ENCODE measurements at regions of chr15 and their contacts with region 1.

Region 1: DNA sequence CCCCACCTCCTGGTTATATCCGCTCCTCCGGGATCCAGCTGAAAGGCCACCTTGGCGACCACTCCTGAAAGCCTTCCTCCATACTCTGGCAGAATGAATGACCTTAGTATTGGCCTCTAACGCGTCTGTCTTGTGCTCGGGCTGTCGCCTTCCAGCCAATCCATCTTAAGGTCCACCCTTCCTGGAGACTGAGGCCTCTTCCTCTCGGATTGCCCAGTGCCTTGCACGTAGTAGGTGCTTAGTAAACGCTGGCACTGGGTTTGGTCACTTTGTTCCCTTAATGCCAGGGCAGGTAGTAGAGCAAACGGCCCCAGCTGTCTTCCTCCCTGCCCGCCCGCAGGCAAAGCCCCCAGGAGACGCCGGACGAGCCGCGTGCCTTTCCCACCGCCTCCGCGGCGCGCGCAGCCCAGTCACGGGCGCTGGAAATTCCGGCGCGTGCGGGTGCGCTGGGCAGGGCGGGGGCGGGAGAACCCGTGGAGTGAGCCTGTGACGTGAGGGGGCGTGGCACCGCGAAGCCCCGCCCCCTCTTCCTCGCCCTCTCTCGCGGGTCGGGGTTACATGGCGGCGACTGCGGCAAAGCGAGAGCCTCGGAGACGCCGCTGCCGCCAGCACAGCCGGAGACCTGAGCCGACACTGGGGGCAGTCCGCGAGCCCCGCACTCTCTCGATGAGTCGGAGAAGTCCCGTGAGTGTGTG is at the start of gene MAPK6:
- DNase-seq: peak; percentile 95
- H3K4me3 Mint-ChIP-seq: peak within 1 kb of the TSS; percentile 98
- H3K27ac Mint-ChIP-seq: peak within 1 kb of the TSS; percentile 99
- H3K4me1 Mint-ChIP-seq: peaks cover 39% of the 10 kb centered on the region
- H3K27me3 Mint-ChIP-seq: no peaks in the 10 kb centered on the region
- total RNA-seq, gene MAPK6: 39.9 to 40.8 TPM

Region 2: GRCh38 chr15:51971375-51972133 is 47.3 kb before region 1 on chr15 and contains the start of gene LEO1:
- CTCF ChIA-PET with region 1: interaction called, 3 read pairs
- POLR2A ChIA-PET with region 1: interaction called, 15 read pairs
- intact Hi-C with region 1: loop called (anchors 1 kb)
- DNase-seq: peak; percentile 93
- H3K4me3 Mint-ChIP-seq: peak within 1 kb of the TSS; percentile 96
- H3K27ac Mint-ChIP-seq: peak within 1 kb of the TSS; percentile 94
- H3K4me1 Mint-ChIP-seq: peaks cover 17% of the 10 kb centered on the region
- H3K27me3 Mint-ChIP-seq: peaks cover 2% of the 10 kb centered on the region
- total RNA-seq, gene LEO1: 27.3 to 28.3 TPM

Region 3: DNA sequence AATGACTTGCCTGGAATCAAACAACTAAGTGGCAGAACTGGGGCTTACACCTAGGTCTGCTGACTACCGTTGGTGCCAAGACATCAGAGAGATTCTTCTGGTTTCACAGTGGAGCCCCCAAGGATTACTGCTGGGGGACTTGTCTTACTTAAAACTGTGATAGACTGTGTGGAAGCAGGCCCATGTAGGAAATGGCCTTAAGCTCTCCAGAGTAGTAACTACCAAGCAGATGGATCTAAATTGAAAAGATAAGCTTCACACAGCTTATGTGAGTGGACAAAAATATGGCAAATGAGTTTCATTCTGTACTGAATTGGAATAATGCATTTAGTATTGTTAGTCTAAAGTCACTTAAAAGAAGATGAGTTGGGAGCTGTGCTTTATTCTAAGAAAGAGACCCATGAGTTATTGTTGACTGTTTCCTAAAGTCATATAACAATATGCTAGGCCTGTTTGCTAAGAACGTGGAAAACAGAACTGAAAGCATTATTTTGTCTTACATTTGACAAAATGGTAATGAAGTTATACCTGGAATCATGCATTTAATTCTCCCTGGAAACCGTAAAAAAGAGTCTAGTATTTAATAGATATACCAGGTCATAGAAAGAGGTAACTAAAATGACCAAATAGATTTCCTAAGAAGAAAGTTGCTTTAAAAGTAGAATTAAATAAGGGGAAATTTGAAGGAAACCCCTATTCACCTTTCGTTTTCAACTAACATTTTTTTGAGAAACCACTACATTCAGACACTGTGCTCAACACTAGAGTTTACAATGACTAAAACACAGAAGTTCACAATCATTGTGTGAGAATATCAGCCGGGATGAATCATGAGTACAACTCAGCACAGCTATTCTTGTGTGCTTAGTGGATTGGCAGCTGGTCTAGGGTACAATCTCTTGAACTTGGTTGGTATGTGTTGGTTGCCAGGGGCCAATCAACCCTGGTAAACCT is 12.8 kb before region 1 on chr15:
- CTCF ChIA-PET with region 1: interaction called, 18 read pairs
- POLR2A ChIA-PET with region 1: interaction called, 32 read pairs
- intact Hi-C with region 1: loop called (anchors 1 kb)
- DNase-seq: peak; percentile 60
- H3K4me3 Mint-ChIP-seq: no peak overlapping the region
- H3K27ac Mint-ChIP-seq: peak overlapping the region; percentile 69
- H3K4me1 Mint-ChIP-seq: peaks cover 63% of the 10 kb centered on the region
- H3K27me3 Mint-ChIP-seq: no peaks in the 10 kb centered on the region

Region 4: GRCh38 chr15:52039925-52040781 is 21.3 kb after region 1 on chr15:
- CTCF ChIA-PET with region 1: interaction called, 3 read pairs
- POLR2A ChIA-PET with region 1: interaction called, 4 read pairs
- intact Hi-C with region 1: loop called (anchors 1 kb)
- DNase-seq: no peak
- H3K4me3 Mint-ChIP-seq: no peak overlapping the region
- H3K27ac Mint-ChIP-seq: no peak overlapping the region
- H3K4me1 Mint-ChIP-seq: peaks cover 54% of the 10 kb centered on the region
- H3K27me3 Mint-ChIP-seq: no peaks in the 10 kb centered on the region

Region 5: DNA sequence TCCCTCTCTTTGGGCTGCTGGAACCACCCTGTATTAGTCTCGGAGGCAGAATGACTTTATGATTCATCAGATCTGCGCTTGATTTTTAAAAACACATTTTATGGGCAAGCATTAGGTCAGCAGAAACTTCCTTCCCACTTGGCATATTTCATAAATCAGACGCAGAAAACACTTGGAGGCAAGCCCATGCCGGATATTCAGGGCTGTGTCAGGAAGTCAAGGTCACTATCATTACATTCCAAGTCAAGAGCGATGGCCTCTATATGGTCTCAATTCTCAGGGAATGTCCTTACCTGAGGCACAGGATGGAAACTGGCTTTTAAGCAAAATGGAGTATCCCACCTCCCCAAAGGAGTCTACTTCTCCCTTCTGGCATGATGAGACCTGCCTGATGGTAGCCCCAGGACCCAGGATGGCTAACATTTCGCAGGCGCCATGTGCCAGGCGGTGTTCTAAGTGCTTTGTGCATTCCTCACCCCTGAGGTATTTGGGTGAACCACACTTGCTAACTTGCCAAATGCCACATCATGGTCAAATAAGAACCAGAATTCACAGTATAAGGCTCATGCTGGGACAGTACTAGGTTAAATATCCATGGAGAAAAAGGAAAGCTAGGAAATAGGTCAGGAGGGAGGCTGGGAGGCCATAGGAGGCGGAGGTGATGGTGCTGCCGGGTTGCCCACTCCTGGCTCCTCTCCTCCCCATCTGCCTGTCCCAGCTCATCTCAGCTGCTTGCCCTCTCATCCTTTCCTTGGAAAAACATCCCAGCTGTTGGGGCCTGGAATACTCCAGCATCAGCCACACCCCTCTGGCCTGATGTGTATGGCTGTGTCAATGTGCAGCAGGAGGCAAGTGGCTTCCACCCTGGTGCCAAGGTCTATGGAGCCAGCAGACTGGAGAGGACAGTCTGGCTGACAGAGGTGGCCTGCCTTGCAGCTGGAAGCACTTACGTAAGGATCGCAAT is 75.0 kb after region 1 on chr15:
- CTCF ChIA-PET with region 1: no interaction called
- POLR2A ChIA-PET with region 1: no interaction called
- intact Hi-C with region 1: no loop called
- DNase-seq: no peak
- H3K4me3 Mint-ChIP-seq: no peak overlapping the region
- H3K27ac Mint-ChIP-seq: no peak overlapping the region
- H3K4me1 Mint-ChIP-seq: no peaks in the 10 kb centered on the region
- H3K27me3 Mint-ChIP-seq: peaks cover 3% of the 10 kb centered on the region